OCI-LY7 (cell line): ENCODE measurements at regions of chr17 and their contacts with region 1.

Region 1: DNA sequence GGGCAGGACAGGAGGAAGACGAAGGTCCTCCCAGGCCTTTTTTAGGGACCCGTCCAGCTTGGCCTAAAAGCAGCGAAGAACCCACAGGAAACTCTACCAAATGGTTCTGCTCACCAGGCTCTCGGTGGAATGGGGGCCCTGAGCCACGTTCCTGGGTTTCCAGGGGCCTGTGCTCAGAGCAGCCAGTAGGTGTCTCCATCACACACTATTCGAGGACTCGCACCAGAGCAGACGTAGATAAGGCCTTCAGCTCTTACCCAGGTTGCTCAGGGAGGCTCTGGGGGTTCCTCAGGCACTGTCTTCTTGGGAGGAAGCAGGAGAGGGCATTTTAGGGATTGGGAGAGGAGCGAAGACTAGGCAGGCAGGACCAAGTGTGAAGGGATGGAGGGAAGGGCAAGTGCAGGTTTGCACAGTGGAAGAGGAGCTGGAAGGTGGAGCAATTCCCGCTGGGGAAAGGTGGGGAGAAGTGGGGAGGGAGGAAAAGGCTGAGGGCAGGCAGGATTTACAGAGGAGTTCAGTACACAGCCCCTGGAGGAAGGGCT is 157.1 kb downstream of the RGS9 start:
- DNase-seq: peak; percentile 67
- H3K4me3 ChIP-seq: no peak overlapping the region
- H3K27ac ChIP-seq: no peak overlapping the region
- H3K4me1 ChIP-seq: no peaks in the 10 kb centered on the region
- CTCF ChIP-seq: peak; percentile 86

Region 2: GRCh38 chr17:65349570-65350315 is 55.5 kb after region 1 on chr17:
- CTCF ChIA-PET with region 1: no interaction called
- POLR2A ChIA-PET with region 1: no interaction called
- intact Hi-C with region 1: no loop called
- DNase-seq: no peak
- H3K4me3 ChIP-seq: no peak overlapping the region
- H3K27ac ChIP-seq: no peak overlapping the region
- H3K4me1 ChIP-seq: no peaks in the 10 kb centered on the region
- CTCF ChIP-seq: no peak

Region 3: DNA sequence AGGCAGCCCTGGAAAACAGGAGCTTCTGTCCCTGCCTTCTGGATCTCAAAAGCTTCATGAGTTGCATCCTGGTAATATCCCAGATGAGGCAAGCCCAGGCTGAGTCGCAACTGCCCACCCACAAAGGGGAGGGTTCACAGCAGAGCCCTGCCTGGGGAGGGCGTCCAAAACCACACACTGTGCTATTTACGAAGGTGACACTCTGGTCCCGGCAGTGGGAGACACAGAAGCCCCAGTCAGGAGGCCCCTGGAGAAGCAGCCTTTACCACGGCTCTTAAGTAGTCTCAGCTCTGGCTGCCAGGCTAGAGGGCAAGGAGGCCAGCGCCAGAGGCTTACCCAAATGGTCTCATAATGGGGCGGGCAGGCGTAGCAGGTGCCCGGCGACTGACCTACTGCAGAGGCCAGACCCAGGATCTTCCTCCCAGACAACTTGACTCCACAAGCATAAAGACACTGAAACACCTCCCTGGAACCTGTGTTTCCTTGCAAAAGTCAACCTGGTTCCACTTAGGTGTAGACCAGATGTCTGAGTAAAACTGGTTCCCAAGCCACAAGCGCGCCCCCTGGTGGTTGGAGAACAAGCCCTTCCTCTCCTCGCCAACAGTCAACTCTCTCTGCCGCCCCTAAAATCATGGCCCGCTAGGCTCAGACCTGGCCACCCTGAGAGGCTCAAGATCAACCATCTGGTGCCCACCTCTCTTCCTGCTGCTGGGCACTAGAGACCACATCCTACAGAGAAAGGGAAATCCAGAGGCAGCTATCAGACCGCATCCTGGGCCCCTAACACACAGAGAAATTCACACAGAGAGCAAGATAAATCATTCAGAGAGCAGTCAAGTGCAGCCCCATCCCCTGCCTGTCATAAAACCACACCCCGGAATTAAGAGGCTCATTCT is 262.0 kb after region 1 on chr17:
- CTCF ChIA-PET with region 1: no interaction called
- POLR2A ChIA-PET with region 1: interaction called, 7 read pairs
- intact Hi-C with region 1: loop called (anchors 2 kb)
- DNase-seq: peak; percentile 75
- H3K4me3 ChIP-seq: no peak overlapping the region
- H3K27ac ChIP-seq: no peak overlapping the region
- H3K4me1 ChIP-seq: peaks cover 12% of the 10 kb centered on the region
- CTCF ChIP-seq: peak; percentile 95

Region 4: GRCh38 chr17:65794572-65794971 is 500.3 kb after region 1 on chr17:
- CTCF ChIA-PET with region 1: interaction called, 3 read pairs
- POLR2A ChIA-PET with region 1: no interaction called
- intact Hi-C with region 1: loop called (anchors 10 kb)
- DNase-seq: peak; percentile 16
- H3K4me3 ChIP-seq: no peak overlapping the region
- H3K27ac ChIP-seq: no peak overlapping the region
- H3K4me1 ChIP-seq: no peaks in the 10 kb centered on the region
- CTCF ChIP-seq: peak; percentile 66

Region 5: DNA sequence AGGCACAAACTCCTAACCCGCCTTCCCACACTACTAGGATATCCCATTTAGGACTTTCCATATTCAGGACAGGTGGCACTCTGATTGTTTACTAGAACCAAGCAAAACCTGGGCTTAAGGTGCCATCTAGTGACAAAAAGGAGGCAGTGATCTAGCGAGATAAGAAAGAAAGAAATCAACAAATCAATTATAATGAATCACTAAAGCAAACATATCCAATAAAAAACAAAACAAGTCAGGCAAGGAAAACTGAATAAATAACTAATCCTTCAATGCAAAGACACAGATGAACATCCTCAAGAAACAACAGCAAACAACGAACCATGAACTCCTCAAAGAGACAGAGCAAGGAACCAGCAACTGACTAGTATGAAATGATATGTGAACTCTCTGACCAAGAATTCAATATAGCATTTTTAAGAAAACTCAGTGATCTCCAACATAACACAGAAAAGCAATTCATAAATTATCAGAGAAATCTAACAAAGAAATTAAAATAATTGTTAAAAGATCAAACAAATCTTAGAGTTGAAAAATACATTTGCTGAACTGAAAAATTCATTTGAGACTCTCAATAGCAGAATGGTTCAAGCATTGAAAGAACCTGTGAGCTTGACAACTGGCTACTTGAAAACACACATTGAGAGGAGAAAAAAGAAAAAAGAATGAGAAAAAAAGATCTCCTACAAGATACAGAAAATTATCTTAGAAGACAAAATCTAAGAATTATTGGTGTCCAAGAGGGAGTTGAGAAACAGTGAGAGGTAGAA is 694.0 kb after region 1 on chr17:
- CTCF ChIA-PET with region 1: no interaction called
- POLR2A ChIA-PET with region 1: interaction called, 3 read pairs
- intact Hi-C with region 1: loop called (anchors 2 kb)
- DNase-seq: peak; percentile 38
- H3K4me3 ChIP-seq: no peak overlapping the region
- H3K27ac ChIP-seq: no peak overlapping the region
- H3K4me1 ChIP-seq: no peaks in the 10 kb centered on the region
- CTCF ChIP-seq: peak; percentile 82

Region 6: DNA sequence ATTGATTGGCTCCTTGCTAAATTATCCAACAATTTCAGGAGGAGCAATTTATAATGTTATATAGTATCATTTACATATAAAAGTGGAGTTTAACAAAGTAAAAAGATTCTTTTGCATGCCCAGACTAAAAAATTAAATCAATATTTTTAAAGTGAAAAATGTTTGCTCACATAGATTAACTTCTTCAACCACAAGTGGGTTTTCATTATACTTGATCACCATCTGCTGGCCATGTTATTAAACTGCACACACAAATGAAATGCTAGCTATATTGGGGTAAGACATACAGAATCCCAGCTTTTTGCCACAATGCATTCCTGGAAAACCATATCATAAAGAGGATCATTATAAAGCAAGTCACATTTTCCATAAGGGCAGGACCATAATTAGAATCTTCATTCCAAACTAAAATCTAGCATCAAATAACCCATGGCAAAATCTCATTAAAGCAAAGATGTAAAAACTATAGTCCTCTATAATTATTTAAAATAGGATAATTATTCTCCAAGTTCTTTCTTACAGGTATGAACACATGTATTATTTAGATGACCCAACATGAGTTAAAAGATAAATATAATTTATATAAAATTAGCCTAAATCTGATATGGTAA is 871.4 kb after region 1 on chr17:
- CTCF ChIA-PET with region 1: interaction called, 3 read pairs
- POLR2A ChIA-PET with region 1: no interaction called
- intact Hi-C with region 1: loop called (anchors 5 kb)
- DNase-seq: peak; percentile 59
- H3K4me3 ChIP-seq: no peak overlapping the region
- H3K27ac ChIP-seq: no peak overlapping the region
- H3K4me1 ChIP-seq: no peaks in the 10 kb centered on the region
- CTCF ChIP-seq: peak; percentile 95